ENCODE measurements at regions of chr1 and their contacts with region 1.

Region 1: GRCh38 chr1:153912349-153912748 is 10.4 kb downstream of the GATAD2B start:
- DNase-seq: no peak
- ATAC-seq: no peak
- H3K4me3 ChIP-seq: no peak overlapping the region
- H3K4me3 Mint-ChIP-seq: peak overlapping the region in 7 of 10 donors; percentile 6 to 76 (median 39)
- H3K27ac ChIP-seq: no peak overlapping the region
- H3K27ac Mint-ChIP-seq: peak overlapping the region in 4 of 9 donors; percentile 12 to 55 (median 48)
- H3K4me1 ChIP-seq: no peaks in the 10 kb centered on the region
- H3K4me1 Mint-ChIP-seq: peaks cover 17 to 50% (median 40%) of the 10 kb centered on the region in 7 donors
- H3K27me3 ChIP-seq: no peaks in the 10 kb centered on the region
- H3K27me3 Mint-ChIP-seq: no peaks in the 10 kb centered on the region

Region 2: DNA sequence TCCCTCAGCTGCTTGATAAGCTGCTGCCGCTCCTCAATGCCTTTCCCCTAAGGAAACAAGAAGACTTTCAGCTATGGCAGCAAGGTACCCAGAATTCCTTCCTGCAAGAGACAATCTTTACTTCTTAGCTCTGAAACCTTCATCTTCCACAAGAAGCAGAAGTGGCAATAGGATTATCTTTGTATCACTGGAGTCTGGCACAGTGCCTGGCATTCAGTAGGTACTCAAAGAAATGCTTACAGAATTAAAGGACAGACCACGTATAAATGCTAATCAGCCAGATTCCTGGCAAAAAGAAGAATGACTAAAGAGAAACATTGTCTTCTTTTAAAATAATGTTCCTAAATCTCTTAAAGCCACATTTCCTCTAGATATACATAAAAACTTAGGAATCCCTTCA is 93.5 kb before region 1 on chr1:
- CTCF ChIA-PET with region 1: no interaction called
- POLR2A ChIA-PET with region 1: no interaction called
- intact Hi-C with region 1: no loop called
- DNase-seq: no peak
- ATAC-seq: no peak
- H3K4me3 ChIP-seq: no peak overlapping the region
- H3K4me3 Mint-ChIP-seq: no peak overlapping the region
- H3K27ac ChIP-seq: no peak overlapping the region
- H3K27ac Mint-ChIP-seq: peak overlapping the region in 3 of 9 donors; percentile 30 to 76 (median 38)
- H3K4me1 ChIP-seq: no peaks in the 10 kb centered on the region
- H3K4me1 Mint-ChIP-seq: peaks cover 0 to 5% (median 4%) of the 10 kb centered on the region in 7 donors
- H3K27me3 ChIP-seq: no peaks in the 10 kb centered on the region
- H3K27me3 Mint-ChIP-seq: no peaks in the 10 kb centered on the region

Region 3: DNA sequence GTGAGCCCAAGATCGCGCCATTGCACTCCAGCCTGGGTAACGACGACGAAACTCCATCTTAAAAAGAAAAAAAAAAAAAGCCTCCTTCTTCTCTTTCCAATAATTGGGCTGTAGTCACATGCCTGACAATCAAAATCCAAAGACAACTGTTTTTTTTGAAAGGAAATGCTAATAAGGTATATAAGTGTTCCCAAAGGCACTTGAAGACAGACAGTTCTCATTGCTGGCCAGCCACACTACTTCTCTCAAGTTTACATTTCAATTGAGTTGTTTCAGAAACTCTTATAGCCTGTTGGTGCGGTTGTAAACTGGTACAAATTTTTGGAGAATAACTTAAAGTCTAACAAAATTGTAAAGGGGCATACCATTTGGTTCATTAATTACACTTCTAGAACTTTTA is 12.8 kb before region 1 on chr1:
- CTCF ChIA-PET with region 1: interaction called, 3 read pairs
- POLR2A ChIA-PET with region 1: interaction called, 4 read pairs
- intact Hi-C with region 1: loop called in 1 of 2 experiments (anchors 2 kb)
- DNase-seq: no peak
- ATAC-seq: no peak
- H3K4me3 ChIP-seq: no peak overlapping the region
- H3K4me3 Mint-ChIP-seq: no peak overlapping the region
- H3K27ac ChIP-seq: no peak overlapping the region
- H3K27ac Mint-ChIP-seq: peak overlapping the region in 3 of 9 donors; percentile 11 to 68 (median 21)
- H3K4me1 ChIP-seq: no peaks in the 10 kb centered on the region
- H3K4me1 Mint-ChIP-seq: peaks cover 5 to 51% (median 24%) of the 10 kb centered on the region in 7 donors
- H3K27me3 ChIP-seq: no peaks in the 10 kb centered on the region
- H3K27me3 Mint-ChIP-seq: no peaks in the 10 kb centered on the region

Region 4: GRCh38 chr1:154081386-154082126 is 169.2 kb after region 1 on chr1:
- CTCF ChIA-PET with region 1: no interaction called
- POLR2A ChIA-PET with region 1: no interaction called
- intact Hi-C with region 1: no loop called
- DNase-seq: no peak
- ATAC-seq: no peak
- H3K4me3 ChIP-seq: no peak overlapping the region
- H3K4me3 Mint-ChIP-seq: no peak overlapping the region
- H3K27ac ChIP-seq: no peak overlapping the region
- H3K27ac Mint-ChIP-seq: peak overlapping the region in 1 of 9 donors; percentile 17
- H3K4me1 ChIP-seq: no peaks in the 10 kb centered on the region
- H3K4me1 Mint-ChIP-seq: no peaks in the 10 kb centered on the region
- H3K27me3 ChIP-seq: no peaks in the 10 kb centered on the region
- H3K27me3 Mint-ChIP-seq: peaks cover 0 to 4% (median 3%) of the 10 kb centered on the region in 5 donors

Measured in naive thymus-derived CD4-positive, alpha-beta T cell (primary cell).